B cell (primary cell): ENCODE measurements at regions of chr11 and their contacts with region 1.

Region 1: DNA sequence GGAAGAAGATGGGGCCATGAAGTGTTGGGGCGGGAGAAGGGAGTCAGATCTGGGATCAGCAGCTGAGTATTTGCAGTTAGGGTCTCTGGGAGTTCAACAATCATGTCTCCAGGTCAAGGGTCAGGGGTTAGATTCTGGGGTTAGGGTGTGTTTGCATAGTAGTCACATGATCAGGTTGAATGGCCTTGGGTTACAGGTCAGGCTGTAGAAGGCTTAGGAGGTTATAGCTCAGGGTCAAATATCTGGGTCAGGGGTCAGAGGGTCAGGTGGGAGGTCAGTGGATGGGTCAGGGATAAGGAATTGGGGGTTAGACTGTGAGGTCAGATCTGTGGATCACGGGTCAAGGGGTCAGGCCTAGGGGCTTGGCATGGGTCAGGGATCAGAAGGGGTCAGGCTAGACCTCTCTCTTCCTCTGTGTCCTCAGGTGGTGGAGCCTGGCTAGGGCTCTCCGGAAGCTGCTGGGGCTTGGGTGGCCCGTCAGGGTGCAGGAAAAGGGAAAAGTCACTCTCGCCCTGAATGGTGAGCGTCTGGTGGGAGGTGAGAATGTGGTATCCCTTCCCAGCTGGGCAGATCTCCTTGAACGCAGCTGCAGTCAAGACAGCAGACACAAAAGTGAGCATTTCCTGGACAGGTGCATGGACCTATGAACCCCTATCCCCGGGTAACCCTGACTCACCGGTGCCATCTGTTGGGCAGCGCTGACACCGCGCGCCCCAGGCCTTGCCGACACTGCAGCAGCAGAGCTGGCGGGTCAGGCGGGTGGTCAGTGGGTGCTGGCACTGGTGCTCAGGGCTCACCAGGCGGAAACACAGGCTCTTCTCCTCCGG is 6.4 kb downstream of the LTBP3 start:
- DNase-seq: peak; percentile 85
- ATAC-seq: peak; percentile 85
- H3K4me3 ChIP-seq: no peak overlapping the region
- H3K4me3 Mint-ChIP-seq: peak overlapping the region; percentile 61
- H3K27ac ChIP-seq: no peak overlapping the region
- H3K27ac Mint-ChIP-seq: peak overlapping the region; percentile 89
- H3K4me1 ChIP-seq: peaks cover 42 to 64% of the 10 kb centered on the region in 2 donors
- H3K4me1 Mint-ChIP-seq: peaks cover 66% of the 10 kb centered on the region
- H3K27me3 ChIP-seq: no peaks in the 10 kb centered on the region
- H3K27me3 Mint-ChIP-seq: no peaks in the 10 kb centered on the region
- CTCF ChIP-seq: peak; percentile 76

Region 2: GRCh38 chr11:65588199-65589054 is 36.6 kb after region 1 on chr11:
- CTCF ChIA-PET with region 1: interaction called, 144 read pairs
- POLR2A ChIA-PET with region 1: interaction called, 3 read pairs
- intact Hi-C with region 1: loop called (anchors 1 kb)
- DNase-seq: peak; percentile 87
- ATAC-seq: peak; percentile 76
- H3K4me3 ChIP-seq: peak overlapping the region in 3 of 5 experiments; percentile 9 to 26 (median 13)
- H3K4me3 Mint-ChIP-seq: peak overlapping the region; percentile 75
- H3K27ac ChIP-seq: peak overlapping the region; percentile 82 to 92
- H3K27ac Mint-ChIP-seq: peak overlapping the region; percentile 93
- H3K4me1 ChIP-seq: peaks cover 27 to 41% of the 10 kb centered on the region in 2 donors
- H3K4me1 Mint-ChIP-seq: peaks cover 38% of the 10 kb centered on the region
- H3K27me3 ChIP-seq: no peaks in the 10 kb centered on the region
- H3K27me3 Mint-ChIP-seq: no peaks in the 10 kb centered on the region
- CTCF ChIP-seq: peak; percentile 83